Activated CD4-positive, alpha-beta T cell treated with anti-CD3 and anti-CD28 coated beads for 36 hours (primary cell): ENCODE measurements at regions of chr11 and their contacts with region 1.

Region 1: GRCh38 chr11:64688534-64688982 is 34.4 kb downstream of the NRXN2 start:
- DNase-seq: peak; percentile 96
- ATAC-seq: peak; percentile 98
- H3K4me3 Mint-ChIP-seq: peak overlapping the region; percentile 25
- H3K27ac Mint-ChIP-seq: no peak overlapping the region
- H3K4me1 Mint-ChIP-seq: peaks cover 19% of the 10 kb centered on the region
- H3K27me3 Mint-ChIP-seq: peaks cover 12% of the 10 kb centered on the region

Region 2: GRCh38 chr11:64675450-64676260 is 12.9 kb before region 1 on chr11:
- CTCF ChIA-PET with region 1: interaction called, 22 read pairs
- POLR2A ChIA-PET with region 1: no interaction called
- intact Hi-C with region 1: no loop called
- DNase-seq: no peak
- ATAC-seq: no peak
- H3K4me3 Mint-ChIP-seq: no peak overlapping the region
- H3K27ac Mint-ChIP-seq: no peak overlapping the region
- H3K4me1 Mint-ChIP-seq: no peaks in the 10 kb centered on the region
- H3K27me3 Mint-ChIP-seq: peaks cover 29% of the 10 kb centered on the region

Region 3: DNA sequence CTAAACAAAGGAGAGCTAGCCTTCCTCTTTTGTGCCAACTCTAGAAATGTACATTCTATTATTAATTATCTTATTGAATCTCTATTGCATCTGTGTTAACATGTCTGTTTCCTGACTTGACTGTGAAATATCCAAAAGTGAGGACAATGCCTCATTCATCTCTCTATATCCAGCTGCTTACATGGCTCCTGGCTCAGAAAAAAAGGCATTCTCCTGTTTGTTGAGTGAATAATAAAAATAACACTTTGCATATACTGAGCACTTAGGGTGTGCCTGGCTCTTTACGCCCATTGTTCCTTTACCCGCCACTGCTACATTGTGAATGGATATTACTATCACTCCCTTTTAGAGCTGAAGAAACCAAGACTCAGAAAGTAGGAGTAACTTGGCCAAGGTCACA is 14.5 kb after region 1 on chr11:
- CTCF ChIA-PET with region 1: interaction called, 33 read pairs
- POLR2A ChIA-PET with region 1: no interaction called
- intact Hi-C with region 1: no loop called
- DNase-seq: no peak
- ATAC-seq: no peak
- H3K4me3 Mint-ChIP-seq: no peak overlapping the region
- H3K27ac Mint-ChIP-seq: no peak overlapping the region
- H3K4me1 Mint-ChIP-seq: no peaks in the 10 kb centered on the region
- H3K27me3 Mint-ChIP-seq: peaks cover 26% of the 10 kb centered on the region

Region 4: DNA sequence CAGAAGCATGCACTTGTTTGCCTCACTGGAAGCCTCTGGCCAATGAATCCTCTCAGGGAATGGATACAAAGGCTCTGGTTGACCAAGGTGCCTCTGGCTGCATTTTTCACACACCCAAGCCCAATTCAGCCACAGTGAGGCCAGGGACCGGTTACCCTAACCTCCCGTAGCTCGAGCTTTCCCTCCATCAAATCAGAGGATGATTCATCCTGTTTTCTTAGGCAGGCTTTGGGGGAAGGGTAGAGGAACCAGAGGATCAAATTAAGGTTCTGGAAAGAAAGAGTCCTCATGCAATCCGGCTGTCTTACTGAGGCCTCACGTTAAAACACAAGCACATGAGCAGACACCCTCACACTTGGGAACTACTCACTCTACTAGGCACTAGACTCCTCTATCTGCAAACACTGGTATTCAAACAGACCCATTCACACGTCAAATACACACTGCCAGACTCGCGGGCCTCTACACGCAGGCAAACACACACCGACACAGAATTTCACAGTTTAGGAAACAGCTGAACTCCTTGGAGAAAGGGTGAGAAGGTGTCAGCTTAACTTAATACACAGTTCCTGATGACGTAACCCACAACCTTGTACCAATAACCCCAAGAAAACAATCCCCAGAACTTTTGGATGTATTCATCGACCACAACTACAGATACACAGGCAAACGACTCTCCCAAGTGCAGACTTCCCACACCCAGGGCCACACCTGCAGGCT is 22.0 kb after region 1 on chr11:
- CTCF ChIA-PET with region 1: interaction called, 33 read pairs
- POLR2A ChIA-PET with region 1: no interaction called
- intact Hi-C with region 1: no loop called
- DNase-seq: no peak
- ATAC-seq: no peak
- H3K4me3 Mint-ChIP-seq: no peak overlapping the region
- H3K27ac Mint-ChIP-seq: no peak overlapping the region
- H3K4me1 Mint-ChIP-seq: peaks cover 13% of the 10 kb centered on the region
- H3K27me3 Mint-ChIP-seq: peaks cover 59% of the 10 kb centered on the region

Region 5: GRCh38 chr11:64723117-64723906 is 34.8 kb after region 1 on chr11 and contains the start of gene NRXN2:
- CTCF ChIA-PET with region 1: interaction called, 13 read pairs
- POLR2A ChIA-PET with region 1: no interaction called
- intact Hi-C with region 1: loop called (anchors 1 kb)
- DNase-seq: peak; percentile 94
- ATAC-seq: peak; percentile 99
- H3K4me3 Mint-ChIP-seq: peak within 1 kb of the TSS; percentile 46
- H3K27ac Mint-ChIP-seq: no peak within 1 kb of the TSS
- H3K4me1 Mint-ChIP-seq: peaks cover 11% of the 10 kb centered on the region
- H3K27me3 Mint-ChIP-seq: peaks cover 19% of the 10 kb centered on the region
- total RNA-seq, gene NRXN2: 0.18 to 0.39 TPM

Region 6: DNA sequence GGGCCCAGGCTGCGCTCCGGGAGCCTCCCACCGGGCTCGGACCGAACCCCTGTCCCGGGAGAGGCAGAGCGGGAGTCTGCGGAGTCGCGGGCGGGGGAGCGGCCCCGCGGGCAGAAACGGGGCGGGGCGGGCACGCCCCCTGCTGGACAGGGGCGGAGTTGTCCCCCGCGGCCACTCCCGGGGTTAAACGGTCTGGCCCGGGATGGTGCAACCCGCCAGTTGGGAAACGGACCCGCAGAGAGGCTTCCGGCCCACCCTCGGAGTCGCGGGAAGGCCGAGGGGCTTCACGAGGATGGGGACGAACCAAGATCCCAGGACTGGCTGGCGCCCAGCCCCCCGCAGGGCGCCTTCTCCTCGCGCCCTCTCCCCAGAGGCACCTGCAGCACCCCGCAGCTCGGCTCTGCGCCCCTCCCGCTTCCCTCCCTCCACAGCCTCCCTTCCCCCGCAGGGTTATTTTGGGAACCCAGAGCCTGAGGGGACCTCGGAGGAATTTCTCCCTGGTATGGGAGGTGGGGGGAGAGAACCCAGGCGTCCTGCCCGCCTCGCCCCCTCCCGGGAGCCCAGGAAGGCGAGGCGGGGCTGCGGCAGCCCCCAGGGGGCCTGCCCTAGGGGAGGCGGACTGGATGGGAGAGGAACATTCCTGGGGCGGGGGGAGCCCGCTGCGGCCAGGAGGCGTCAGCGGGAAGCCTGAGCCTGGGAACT is 54.5 kb after region 1 on chr11:
- CTCF ChIA-PET with region 1: interaction called, 12 read pairs
- POLR2A ChIA-PET with region 1: no interaction called
- intact Hi-C with region 1: loop called (anchors 1 to 2 kb)
- DNase-seq: peak; percentile 86
- ATAC-seq: peak; percentile 47
- H3K4me3 Mint-ChIP-seq: peak overlapping the region; percentile 73
- H3K27ac Mint-ChIP-seq: no peak overlapping the region
- H3K4me1 Mint-ChIP-seq: peaks cover 25% of the 10 kb centered on the region
- H3K27me3 Mint-ChIP-seq: peaks cover 5% of the 10 kb centered on the region